ENCODE measurements at regions of chr15 and their contacts with region 1.

Region 1: DNA sequence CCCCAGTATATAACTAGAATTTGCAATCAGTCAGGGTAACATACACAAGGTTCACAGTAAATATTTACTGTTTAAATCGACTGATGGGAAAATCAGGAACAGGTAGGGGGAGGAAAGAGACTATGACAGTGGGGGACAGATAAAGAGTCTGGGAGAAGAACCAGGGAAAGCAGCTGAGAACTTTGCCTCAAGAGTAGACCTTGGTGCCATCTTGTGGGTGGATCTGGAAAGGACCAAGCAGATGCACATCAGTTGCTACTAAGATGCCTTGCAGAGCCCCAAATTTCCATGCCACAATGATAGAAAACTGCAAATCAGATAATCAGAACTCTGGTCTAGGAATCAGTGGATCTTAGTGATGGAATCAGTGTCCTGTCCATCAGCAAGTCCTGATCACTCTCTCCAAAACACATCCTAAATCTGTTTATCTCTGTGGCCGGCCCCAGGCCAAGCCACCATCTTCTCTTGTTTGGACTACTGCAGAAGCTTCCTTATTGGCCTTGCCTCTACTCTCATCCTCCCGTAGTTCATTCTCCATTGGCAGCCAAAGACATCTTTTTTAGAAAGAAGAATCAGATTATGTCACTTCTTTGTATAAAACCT is 62.7 kb downstream of the PDE8A start:
- DNase-seq: peak; percentile 48 to 77 (median 57)
- H3K4me3 ChIP-seq: no peak overlapping the region
- H3K27ac ChIP-seq: no peak overlapping the region
- H3K4me1 ChIP-seq: no peaks in the 10 kb centered on the region
- H3K27me3 ChIP-seq: no peaks in the 10 kb centered on the region
- CTCF ChIP-seq: peak; percentile 26 to 62 (median 59)
- EP300 ChIP-seq: no peak
- POLR2A ChIP-seq: no peak

Region 2: GRCh38 chr15:84955089-84955848 is 89.1 kb before region 1 on chr15:
- intact Hi-C with region 1: loop called in 3 of 4 experiments (anchors 2 to 5 kb)
- DNase-seq: peak; percentile 70 to 85 (median 80)
- H3K4me3 ChIP-seq: peak overlapping the region; percentile 25
- H3K27ac ChIP-seq: no peak overlapping the region
- H3K4me1 ChIP-seq: peaks cover 3% of the 10 kb centered on the region
- H3K27me3 ChIP-seq: no peaks in the 10 kb centered on the region
- CTCF ChIP-seq: peak; percentile 68 to 84 (median 81)
- EP300 ChIP-seq: no peak
- POLR2A ChIP-seq: no peak

Region 3: DNA sequence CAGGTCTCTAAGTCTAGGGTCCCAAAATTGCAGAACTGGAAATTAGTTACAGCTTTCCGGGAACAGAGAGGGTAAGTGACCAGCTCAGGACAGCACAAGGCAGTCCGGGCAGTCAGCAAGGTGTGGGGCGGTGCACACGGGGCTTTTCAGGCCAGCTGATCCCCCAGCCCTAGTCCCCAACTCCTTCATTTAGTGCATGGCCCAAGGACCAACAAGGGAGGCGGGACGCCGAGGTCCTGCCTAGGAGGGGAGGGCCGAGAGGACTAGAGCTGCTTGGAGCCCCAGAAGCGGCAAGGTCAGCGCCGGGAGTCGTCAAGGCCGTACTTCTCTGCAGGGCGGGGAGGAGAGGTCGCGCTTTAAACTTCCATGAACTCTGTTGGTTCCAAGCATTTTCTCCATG is 64.7 kb before region 1 on chr15:
- intact Hi-C with region 1: loop called in 1 of 4 experiments (anchors 10 kb)
- DNase-seq: peak; percentile 49 to 74 (median 63)
- H3K4me3 ChIP-seq: peak overlapping the region; percentile 79
- H3K27ac ChIP-seq: peak overlapping the region in 1 of 2 donors; percentile 90
- H3K4me1 ChIP-seq: peaks cover 2% of the 10 kb centered on the region
- H3K27me3 ChIP-seq: no peaks in the 10 kb centered on the region
- CTCF ChIP-seq: no peak
- EP300 ChIP-seq: no peak
- POLR2A ChIP-seq: no peak